SK-N-SH (cell line): ENCODE measurements at regions of chr12 and their contacts with region 1.

Region 1: DNA sequence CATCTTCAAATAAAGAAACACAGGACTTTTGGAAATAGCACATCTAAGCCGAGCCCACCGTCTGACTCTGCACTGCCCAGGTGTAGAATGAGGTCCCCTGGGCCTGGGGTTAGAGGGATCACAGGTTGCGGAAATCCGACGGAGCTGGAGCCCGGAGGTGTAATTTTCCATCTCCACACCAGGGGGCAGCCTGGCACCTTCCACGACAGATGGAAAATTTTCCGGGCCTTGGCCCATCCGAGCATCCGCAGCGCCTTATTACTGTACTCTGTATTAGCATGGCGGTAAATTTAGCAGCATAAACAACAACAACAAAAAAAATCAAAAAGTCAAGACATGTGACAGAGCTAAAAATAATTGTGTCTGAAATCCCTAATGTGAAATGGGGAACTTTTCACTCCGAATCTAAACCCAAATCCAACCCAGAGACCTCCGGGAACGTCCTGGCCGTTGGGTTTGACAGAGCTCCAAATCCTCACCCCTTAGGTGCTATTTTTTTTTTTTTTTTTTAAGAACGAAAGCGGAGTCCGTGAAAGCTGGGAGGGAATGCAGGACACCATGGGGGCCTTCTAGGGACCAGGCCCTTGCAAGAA is 93.9 kb downstream of the KSR2 start:
- DNase-seq: peak; percentile 82
- H3K4me3 ChIP-seq: no peak overlapping the region
- H3K27ac ChIP-seq: no peak overlapping the region
- H3K4me1 ChIP-seq: no peaks in the 10 kb centered on the region
- H3K27me3 ChIP-seq: no peaks in the 10 kb centered on the region
- CTCF ChIP-seq: peak; percentile 84
- EP300 ChIP-seq: no peak
- RAD21 ChIP-seq: peak; percentile 89

Region 2: DNA sequence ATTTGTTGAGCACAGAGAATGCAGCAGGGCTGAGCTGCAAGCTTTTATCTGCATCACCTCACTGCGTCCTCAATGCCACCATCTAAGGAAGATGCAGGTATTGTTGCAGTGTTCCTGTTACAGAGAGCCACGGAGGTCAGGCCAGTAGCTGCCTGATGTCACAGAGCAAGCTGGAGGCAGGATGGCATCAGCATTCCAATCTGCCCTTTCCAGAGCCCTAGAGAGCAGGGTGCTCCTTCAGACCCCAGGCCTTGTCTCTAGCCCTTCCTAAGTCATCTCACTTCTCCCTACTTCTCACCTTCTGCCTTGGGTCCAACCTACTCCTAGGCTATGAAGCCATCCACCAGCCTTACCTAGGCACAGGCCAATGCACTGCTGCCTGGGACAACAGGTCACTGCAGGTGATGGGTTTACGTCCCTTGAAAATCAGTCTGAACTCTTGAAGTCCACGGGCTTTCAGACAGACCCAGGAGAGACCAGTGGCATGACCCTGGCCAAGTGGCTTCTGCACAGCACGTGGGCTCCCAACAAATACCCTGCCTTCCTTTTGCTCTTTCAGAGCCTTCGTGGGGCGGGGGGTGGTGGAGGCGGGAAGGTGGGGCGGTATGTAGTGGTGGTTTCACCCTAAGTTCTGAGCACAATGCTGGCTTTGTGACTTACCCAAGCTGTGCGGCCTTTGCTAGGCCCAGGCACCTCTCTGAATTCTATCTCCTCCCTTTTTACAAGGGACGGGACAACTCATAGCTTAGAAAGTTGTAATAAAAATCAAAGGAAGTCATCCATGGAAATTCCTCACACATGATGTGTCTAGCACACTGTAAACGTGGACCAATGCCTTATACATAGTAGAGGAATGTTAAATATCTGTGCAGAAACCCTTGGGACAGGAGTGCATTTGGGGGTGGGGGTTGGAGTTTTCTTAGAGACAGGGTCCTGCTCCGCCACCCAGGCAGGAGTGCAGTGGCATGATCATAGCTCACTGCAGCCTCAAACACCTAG is 42.2 kb before region 1 on chr12:
- CTCF ChIA-PET with region 1: no interaction called
- POLR2A ChIA-PET with region 1: no interaction called
- DNase-seq: no peak
- H3K4me3 ChIP-seq: no peak overlapping the region
- H3K27ac ChIP-seq: no peak overlapping the region
- H3K4me1 ChIP-seq: peaks cover 0 to 27% of the 10 kb centered on the region in 2 experiments; a peak in 1 of 4 replicates
- H3K27me3 ChIP-seq: no peaks in the 10 kb centered on the region
- CTCF ChIP-seq: no peak
- EP300 ChIP-seq: no peak
- RAD21 ChIP-seq: no peak

Region 3: GRCh38 chr12:117850048-117850447 is 24.9 kb before region 1 on chr12:
- CTCF ChIA-PET with region 1: interaction called, 17 read pairs
- POLR2A ChIA-PET with region 1: no interaction called
- DNase-seq: peak; percentile 81
- H3K4me3 ChIP-seq: no peak overlapping the region; a peak in 1 of 4 replicates
- H3K27ac ChIP-seq: no peak overlapping the region
- H3K4me1 ChIP-seq: no peaks in the 10 kb centered on the region
- H3K27me3 ChIP-seq: no peaks in the 10 kb centered on the region
- CTCF ChIP-seq: peak; percentile 81
- EP300 ChIP-seq: no peak
- RAD21 ChIP-seq: peak; percentile 79

Region 4: GRCh38 chr12:118035246-118036041 is 160.5 kb after region 1 on chr12:
- CTCF ChIA-PET with region 1: interaction called, 137 read pairs
- POLR2A ChIA-PET with region 1: no interaction called
- DNase-seq: peak; percentile 27
- H3K4me3 ChIP-seq: no peak overlapping the region
- H3K27ac ChIP-seq: peak overlapping the region in 1 of 2 experiments; percentile 20; a peak in 1 of 4 replicates
- H3K4me1 ChIP-seq: peaks cover 11 to 12% of the 10 kb centered on the region in 2 experiments; a peak in 2 of 4 replicates
- H3K27me3 ChIP-seq: no peaks in the 10 kb centered on the region
- CTCF ChIP-seq: no peak
- EP300 ChIP-seq: no peak
- RAD21 ChIP-seq: no peak

Region 5: DNA sequence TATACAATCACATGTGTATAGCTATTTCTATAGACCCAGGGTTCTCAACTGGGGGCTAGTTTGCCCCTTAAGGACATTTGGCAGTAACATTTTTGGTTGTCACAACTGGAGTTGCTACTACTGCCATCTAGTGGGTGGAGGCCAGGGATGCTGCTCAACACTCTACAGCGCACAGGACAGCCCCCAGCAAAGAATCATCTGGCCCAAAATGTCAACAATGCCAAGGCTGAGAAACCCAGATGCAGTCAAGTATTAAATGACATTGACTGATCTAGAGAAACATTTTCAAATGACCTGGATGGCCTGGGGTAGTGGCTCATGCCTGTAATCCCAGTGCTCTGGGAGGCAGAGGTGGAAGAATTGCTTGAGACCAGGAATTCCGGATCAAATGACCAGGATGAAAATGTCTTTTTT is 180.2 kb after region 1 on chr12:
- CTCF ChIA-PET with region 1: interaction called, 14 read pairs
- POLR2A ChIA-PET with region 1: no interaction called
- DNase-seq: peak; percentile 69
- H3K4me3 ChIP-seq: no peak overlapping the region; a peak in 1 of 4 replicates
- H3K27ac ChIP-seq: peak overlapping the region in 1 of 2 experiments; percentile 41; a peak in 1 of 4 replicates
- H3K4me1 ChIP-seq: peaks cover 5 to 27% of the 10 kb centered on the region in 2 experiments
- H3K27me3 ChIP-seq: no peaks in the 10 kb centered on the region
- CTCF ChIP-seq: peak; percentile 80
- EP300 ChIP-seq: no peak
- RAD21 ChIP-seq: peak; percentile 35

Region 6: GRCh38 chr12:118061011-118061875 is 186.3 kb after region 1 on chr12 and contains the start of gene WSB2:
- CTCF ChIA-PET with region 1: interaction called, 14 read pairs
- POLR2A ChIA-PET with region 1: no interaction called
- DNase-seq: peak; percentile 88
- H3K4me3 ChIP-seq: peak within 1 kb of the TSS; percentile 71 to 80
- H3K27ac ChIP-seq: peak within 1 kb of the TSS; percentile 88 to 97
- H3K4me1 ChIP-seq: peaks cover 10 to 14% of the 10 kb centered on the region in 2 experiments; a peak in 3 of 4 replicates
- H3K27me3 ChIP-seq: no peaks in the 10 kb centered on the region
- CTCF ChIP-seq: no peak
- EP300 ChIP-seq: no peak
- RAD21 ChIP-seq: no peak
- polyA plus RNA-seq, gene WSB2: 54.4 and 62.6 TPM in 2 replicates

Region 7: DNA sequence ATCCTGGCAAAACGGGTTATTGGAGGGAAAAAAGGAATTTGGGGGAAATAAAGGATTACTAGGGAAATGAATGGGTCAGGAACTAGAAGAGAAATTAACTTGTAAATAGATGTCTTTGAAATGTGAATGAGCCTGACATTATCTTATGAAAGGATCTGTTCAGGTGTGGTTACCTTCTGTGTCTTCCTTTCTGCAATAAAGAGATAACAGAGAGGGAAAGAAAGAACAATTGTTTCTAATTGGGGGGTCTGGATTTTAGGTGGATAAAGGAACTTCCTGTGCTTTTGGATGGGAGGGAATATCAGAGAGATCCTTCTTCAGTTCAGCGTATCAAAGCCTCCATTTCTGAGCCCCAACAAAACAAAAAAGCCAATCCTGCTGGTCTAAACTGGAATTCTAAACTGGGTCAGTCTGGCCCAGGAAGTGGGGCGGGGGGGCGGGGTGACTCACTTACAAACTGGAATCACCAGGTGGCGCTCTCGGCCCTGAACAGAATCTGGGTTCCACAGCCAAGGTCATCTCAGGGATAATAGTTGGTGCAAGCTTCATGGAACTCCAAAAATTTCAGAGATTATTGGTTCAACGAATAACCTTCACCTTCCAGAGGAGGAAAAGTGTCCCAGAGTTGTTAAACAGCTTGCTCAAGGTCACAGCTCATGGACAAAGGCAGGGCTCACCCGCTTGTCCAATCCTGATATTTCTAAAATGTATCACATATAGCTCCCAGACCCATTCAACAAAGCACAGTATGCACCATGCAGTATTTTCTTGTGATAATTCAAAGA is 245.8 kb after region 1 on chr12:
- CTCF ChIA-PET with region 1: interaction called, 12 read pairs
- POLR2A ChIA-PET with region 1: no interaction called
- DNase-seq: peak; percentile 86
- H3K4me3 ChIP-seq: no peak overlapping the region
- H3K27ac ChIP-seq: peak overlapping the region; percentile 31 to 47; a peak in 2 of 4 replicates
- H3K4me1 ChIP-seq: no peaks in the 10 kb centered on the region
- H3K27me3 ChIP-seq: no peaks in the 10 kb centered on the region
- CTCF ChIP-seq: peak; percentile 48
- EP300 ChIP-seq: no peak
- RAD21 ChIP-seq: peak; percentile 60